Head of caudate nucleus (tissue), 42 donors: ENCODE measurements at regions of chr15 and their contacts with region 1.

Region 1: GRCh38 chr15:80152180-80152845 is 486 bp upstream of the FAH start:
- DNase-seq: peak; percentile 52 to 91 (median 81)

Region 2: DNA sequence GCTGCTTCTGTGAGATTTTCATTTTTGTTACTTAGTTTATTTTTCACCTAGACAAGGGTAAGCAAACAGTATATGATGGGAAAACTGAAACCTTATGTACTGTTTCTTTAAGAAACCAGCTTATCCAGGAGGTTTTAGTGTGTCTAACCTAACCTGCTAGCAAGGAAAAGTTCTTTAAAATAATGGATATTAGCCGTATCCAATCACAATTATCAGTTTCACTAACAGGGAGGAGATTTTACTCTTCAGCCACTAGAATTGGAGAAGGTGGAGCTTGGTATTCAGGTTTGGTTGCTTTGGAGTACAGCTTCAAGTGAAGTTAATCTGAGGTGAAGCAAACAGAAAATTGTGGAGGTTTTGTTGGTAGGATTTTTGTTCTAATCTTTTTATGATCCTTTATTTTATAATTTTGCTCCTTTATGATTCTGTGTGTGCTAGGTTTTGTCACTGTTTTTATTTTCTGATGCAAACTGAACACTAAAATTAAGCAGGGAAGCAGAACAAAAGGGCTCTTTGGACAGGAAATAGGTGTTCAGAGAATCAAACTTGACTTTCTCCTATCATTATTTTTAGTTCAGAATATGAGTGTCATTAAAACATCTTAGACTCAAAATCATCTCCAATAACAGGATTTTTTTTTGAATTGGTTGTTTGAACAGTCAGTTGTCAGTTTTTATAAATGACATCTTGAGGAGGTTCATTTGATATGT is 79.9 kb before region 1 on chr15:
- intact Hi-C with region 1: loop called (anchors 10 kb)
- DNase-seq: peak in 9 of 42 donors; percentile 19 to 62 (median 43)